ENCODE measurements at regions of chr19 and their contacts with region 1.

Region 1: GRCh38 chr19:40358773-40359172 is 10.3 kb downstream of the PLD3 start:
- DNase-seq: no peak
- ATAC-seq: peak; percentile 40 to 63

Region 2: DNA sequence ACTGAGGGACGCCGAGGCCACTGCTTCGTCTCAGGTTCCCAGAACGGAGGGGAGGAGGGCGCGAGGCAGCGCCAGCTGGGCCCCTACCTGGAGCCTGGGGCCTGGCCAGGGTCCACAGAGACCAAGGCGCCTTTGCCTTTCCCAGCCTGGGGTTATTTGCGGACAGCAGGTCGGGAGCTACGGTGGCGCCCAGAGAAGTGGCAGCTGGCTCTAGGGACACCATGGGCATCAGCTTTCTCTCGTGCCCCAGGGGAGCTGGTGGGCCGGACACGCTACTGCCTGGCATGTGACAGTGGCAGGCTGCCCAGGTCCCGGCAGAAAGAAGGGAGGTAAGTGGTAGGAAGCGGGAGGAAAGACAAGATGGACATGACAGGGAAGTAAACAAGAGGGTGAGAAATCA is 92.7 kb before region 1 on chr19:
- intact Hi-C with region 1: no loop called
- DNase-seq: peak; percentile 62
- ATAC-seq: peak; percentile 63 to 67

Region 3: DNA sequence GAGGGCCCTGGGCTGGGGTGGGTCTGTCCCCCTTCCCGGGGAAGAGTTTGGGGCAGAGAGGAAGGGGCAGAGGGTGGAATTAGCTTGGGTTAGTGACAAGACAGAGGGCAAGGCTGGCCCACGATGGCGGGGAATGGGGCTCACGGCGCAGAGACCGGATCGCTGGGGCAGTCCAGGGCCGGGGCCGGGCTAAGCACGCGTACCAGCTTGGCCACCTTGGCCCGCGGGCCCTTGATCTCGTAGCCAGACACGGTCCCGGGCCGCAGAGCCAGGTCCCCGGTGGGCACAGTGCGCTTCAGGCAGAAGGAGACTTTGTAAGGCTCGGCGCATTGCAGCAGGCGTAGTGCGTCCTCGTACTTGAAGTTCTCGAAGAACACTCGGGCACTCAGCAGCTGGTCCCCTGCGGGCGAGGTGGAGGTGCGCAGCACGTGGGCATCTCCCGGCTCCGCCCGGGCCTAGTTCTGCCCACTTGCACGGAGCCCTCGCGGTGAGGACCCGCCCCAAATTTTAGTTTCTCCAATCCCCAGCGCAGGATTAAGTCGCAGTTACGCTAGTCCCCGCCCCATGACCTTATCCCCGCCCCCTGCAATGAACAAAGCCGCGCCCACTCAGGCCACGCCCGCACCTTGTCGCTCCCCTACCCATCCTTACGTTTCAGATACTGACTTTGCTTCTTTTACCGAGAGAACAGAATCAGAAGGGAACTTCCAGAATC is 39.8 kb after region 1 on chr19:
- intact Hi-C with region 1: loop called in 1 of 2 experiments (anchors 5 kb)
- DNase-seq: peak; percentile 61
- ATAC-seq: peak; percentile 14 to 17

Measured in left cardiac atrium (tissue), 4 donors.